ENCODE measurements at regions of chr2 and their contacts with region 1.

Region 1: GRCh38 chr2:169997140-169997887 is 170.1 kb downstream of the UBR3 start:
- DNase-seq: no peak
- ATAC-seq: no peak
- H3K4me3 ChIP-seq: no peak overlapping the region
- H3K27ac ChIP-seq: no peak overlapping the region
- H3K4me1 ChIP-seq: no peaks in the 10 kb centered on the region
- H3K27me3 ChIP-seq: no peaks in the 10 kb centered on the region
- CTCF ChIP-seq: no peak
- EP300 ChIP-seq: no peak
- POLR2A ChIP-seq: no peak
- RAD21 ChIP-seq: no peak

Region 2: DNA sequence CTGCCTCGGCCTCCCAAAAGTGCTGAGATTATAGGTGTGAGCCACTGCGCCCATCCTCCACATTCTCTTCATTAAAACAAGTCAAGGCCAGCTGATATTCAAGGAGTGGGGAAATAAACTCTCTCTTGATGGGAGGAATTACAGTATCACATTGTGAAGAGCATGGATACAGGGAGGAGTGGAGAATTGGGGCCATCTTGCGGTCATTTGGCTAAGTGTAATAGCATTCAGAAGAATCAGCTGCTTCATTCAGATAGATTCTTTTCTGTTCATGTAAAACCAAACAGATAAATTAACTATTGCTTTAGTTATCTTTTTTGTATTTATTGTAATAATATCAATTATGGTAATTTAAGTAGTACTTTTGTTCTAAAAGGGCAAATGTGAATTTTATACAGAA is 13.8 kb before region 1 on chr2:
- CTCF ChIA-PET with region 1: interaction called, 3 read pairs
- POLR2A ChIA-PET with region 1: no interaction called
- RAD21 ChIA-PET with region 1: no interaction called
- SMC1A ChIA-PET with region 1: interaction called, 12 read pairs
- in situ Hi-C with region 1: no loop called
- intact Hi-C with region 1: no loop called
- DNase-seq: no peak
- ATAC-seq: no peak
- H3K4me3 ChIP-seq: no peak overlapping the region
- H3K27ac ChIP-seq: no peak overlapping the region
- H3K4me1 ChIP-seq: no peaks in the 10 kb centered on the region
- H3K27me3 ChIP-seq: no peaks in the 10 kb centered on the region
- CTCF ChIP-seq: no peak
- EP300 ChIP-seq: no peak
- POLR2A ChIP-seq: no peak
- RAD21 ChIP-seq: no peak

Region 3: GRCh38 chr2:170012773-170013172 is 15.5 kb after region 1 on chr2:
- CTCF ChIA-PET with region 1: no interaction called
- POLR2A ChIA-PET with region 1: no interaction called
- RAD21 ChIA-PET with region 1: no interaction called
- SMC1A ChIA-PET with region 1: no interaction called
- in situ Hi-C with region 1: no loop called
- intact Hi-C with region 1: no loop called
- DNase-seq: no peak
- ATAC-seq: no peak
- H3K4me3 ChIP-seq: no peak overlapping the region
- H3K27ac ChIP-seq: no peak overlapping the region
- H3K4me1 ChIP-seq: no peaks in the 10 kb centered on the region
- H3K27me3 ChIP-seq: no peaks in the 10 kb centered on the region
- CTCF ChIP-seq: no peak
- EP300 ChIP-seq: no peak
- POLR2A ChIP-seq: no peak
- RAD21 ChIP-seq: no peak